Right ventricle myocardium inferior (tissue), 1 donor: ENCODE measurements at regions of chr10 and their contacts with region 1.

Region 1: DNA sequence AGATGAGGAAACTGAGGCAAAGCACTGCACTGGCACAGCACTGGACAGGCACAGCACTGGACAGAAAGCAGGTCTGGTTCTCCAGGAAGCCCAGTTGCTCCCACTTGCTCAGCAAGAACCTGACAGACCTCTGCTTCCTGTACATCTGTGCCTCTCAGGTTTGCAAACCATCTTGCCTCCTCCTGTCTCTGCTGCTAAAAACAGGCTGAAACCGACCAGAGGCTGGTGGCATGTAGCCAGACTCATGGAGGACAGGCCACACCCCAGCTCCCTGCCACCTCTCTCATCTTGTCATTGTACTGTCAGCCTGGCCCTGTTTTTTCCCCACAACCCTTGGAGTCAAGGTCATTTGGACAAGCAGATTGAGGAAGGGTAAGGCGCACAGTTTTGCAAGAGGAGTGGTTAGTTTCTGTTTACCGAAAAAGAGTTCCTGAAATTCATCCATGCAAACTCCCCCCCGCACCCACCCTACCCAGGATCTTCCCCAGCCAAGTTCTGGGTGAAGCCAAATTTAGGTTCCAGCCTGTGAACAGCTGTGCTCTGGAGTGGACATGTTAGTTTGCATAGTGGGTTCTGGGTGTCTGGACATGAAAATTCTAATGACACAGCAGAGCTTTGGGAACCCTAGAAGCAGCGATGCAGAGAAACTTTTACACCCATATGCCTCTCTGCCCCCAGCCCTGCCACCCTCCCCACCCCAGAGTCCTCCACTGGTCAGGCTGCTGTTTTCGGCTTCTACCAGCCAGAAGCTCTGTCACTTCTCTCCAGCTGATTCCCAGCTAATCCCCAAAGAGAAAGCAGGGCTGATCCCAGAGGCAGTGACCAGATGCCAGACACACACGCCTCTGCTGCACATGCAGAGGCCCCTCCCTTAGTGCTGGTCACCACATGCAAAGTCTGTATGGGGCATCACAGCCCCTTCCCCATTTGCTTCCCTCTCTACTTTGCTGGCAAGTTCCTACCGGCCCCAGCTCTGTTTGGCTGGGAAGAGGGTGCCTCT is 8.5 kb upstream of the C10orf105 start:
- DNase-seq: peak; percentile 87
- ATAC-seq: peak; percentile 82

Region 2: DNA sequence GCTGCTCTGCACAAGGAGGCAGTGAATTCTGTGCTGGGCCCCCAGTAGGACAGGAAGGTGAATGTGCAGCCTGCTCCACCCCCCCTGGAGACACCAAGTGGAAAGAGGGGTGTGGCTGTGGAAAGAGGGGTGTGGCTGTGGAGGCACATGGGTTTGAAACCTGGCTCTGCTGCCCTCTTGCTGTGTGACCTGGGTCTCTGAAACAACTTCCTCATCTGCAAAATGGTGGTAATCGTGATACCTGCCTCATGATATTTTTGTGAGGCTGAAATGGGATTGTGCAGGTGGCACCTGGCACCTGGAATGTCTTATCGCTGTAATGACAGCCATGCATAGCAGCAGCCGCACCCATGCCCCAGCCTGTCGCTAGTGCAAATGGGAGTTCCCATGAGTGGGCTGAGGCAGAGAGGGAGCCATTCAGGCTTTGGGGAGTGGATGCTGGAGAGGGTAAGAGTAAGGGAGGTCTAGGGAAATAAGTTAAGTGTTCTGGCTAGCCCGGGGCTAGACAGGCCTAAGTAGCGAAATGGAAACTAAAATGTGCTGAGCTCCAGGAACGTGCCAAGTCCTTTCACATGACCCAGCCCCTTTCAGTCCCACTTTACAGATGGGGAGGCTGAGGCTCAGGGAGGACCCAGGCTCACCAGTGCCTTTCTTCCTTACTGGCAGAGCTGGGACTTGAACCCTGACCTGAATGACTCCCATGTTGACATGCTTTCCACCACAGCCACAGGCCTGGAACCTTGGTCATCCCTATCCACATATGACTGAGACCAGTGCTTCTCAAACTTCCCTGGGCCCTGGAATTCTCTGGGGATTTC is 43.5 kb before region 1 on chr10:
- intact Hi-C with region 1: no loop called
- DNase-seq: no peak
- ATAC-seq: no peak

Region 3: DNA sequence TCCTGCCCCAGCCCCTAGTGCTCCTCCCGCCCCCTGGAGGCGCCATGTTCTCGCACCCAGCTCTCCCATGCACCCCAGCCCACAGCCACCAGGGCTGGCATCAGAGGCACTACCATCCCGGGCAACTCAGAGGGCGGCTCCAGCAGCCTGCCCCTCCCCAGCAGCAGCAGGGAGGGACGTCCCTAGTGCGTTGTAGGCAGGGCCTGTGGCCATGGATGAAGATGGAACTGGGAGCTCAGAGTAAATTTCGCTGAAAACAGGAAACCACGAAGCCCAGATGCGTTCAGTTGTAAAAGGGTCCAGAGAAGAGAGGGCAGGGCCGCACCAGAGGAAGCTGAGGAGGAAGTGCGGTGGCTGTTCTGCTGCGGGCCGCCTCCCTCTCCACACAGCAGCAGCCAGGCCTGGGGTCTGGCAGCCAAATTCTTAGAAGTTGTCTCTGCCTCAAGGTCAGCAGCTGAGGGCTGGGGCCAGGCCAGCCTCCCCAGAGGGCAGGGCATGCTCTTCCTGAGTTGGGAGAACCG is 20.7 kb after region 1 on chr10:
- intact Hi-C with region 1: loop called (anchors 2 kb)
- DNase-seq: peak; percentile 93
- ATAC-seq: peak; percentile 63